BJ (cell line): ENCODE measurements at regions of chr9 and their contacts with region 1.

Region 1: GRCh38 chr9:86413966-86414880 is 60.0 kb upstream of the TUT7 start:
- DNase-seq: no peak
- H3K4me3 ChIP-seq: no peak overlapping the region
- H3K27me3 ChIP-seq: no peaks in the 10 kb centered on the region; the same call in 1 of the 2 replicates
- CTCF ChIP-seq: peak; percentile 51

Region 2: GRCh38 chr9:86434039-86434726 is 20.0 kb after region 1 on chr9:
- CTCF ChIA-PET with region 1: interaction called, 31 read pairs
- POLR2A ChIA-PET with region 1: no interaction called
- DNase-seq: no peak
- H3K4me3 ChIP-seq: no peak overlapping the region
- H3K27me3 ChIP-seq: no peaks in the 10 kb centered on the region
- CTCF ChIP-seq: peak; percentile 78